Dendritic cell treated with granulocyte-macrophage colony-stimulating factor and Interleukin-4, amounts not matched to agents 40 ng/mL and 50 ng/mL, for 4 days (primary cell): ENCODE measurements at regions of chr2 and their contacts with region 1.

Region 1: GRCh38 chr2:178280244-178280852 is 86.0 kb downstream of the OSBPL6 start:
- H3K4me3 Mint-ChIP-seq: no peak overlapping the region
- H3K27ac Mint-ChIP-seq: no peak overlapping the region
- H3K4me1 Mint-ChIP-seq: peaks cover 24% of the 10 kb centered on the region
- H3K27me3 Mint-ChIP-seq: peaks cover 1% of the 10 kb centered on the region

Region 2: DNA sequence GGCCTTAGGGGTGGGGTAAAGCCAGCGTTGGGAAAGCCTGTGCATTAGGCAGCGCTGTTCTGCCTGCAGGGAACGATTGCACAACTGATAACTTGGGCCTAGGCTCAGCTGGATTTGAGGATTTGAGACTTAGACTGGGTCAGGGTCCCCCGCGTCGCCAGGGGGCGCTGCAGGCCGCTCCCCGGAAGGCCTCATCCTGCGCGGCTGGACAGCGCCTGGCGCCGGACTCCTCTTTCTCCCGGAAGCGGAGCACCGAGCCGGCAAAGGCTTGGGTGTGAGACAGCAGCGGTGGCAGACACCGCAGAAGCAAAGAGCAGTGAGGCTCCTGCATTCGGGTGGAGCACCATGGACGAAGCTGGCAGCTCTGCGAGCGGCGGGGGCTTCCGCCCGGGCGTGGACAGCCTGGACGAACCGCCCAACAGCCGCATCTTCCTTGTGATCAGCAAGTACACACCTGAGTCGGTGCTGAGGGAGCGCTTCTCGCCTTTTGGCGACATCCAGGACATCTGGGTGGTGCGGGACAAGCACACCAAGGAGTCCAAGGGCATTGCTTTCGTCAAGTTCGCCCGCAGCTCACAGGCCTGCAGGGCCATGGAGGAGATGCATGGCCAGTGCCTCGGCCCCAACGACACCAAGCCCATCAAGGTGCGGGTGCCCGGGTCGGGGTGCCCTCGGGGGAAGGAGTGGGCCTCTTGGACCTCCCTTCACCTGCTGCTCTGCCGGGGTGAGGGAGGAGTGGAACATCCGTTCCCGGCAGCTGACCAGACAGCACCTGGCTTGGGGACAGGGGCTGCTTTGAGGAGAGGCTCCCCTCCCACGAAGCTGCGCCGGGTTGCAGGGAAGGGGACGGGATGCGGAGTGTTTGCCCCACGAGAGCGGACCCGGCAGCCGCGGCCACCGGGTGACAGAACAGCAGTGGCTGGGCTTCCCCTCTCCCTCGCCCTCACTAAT is 167.9 kb before region 1 on chr2 and contains the start of gene RBM45:
- intact Hi-C with region 1: loop called (anchors 2 kb)
- H3K4me3 Mint-ChIP-seq: peak within 1 kb of the TSS; percentile 91
- H3K27ac Mint-ChIP-seq: peak within 1 kb of the TSS; percentile 89
- H3K4me1 Mint-ChIP-seq: peaks cover 32% of the 10 kb centered on the region
- H3K27me3 Mint-ChIP-seq: peaks cover 3% of the 10 kb centered on the region

Region 3: DNA sequence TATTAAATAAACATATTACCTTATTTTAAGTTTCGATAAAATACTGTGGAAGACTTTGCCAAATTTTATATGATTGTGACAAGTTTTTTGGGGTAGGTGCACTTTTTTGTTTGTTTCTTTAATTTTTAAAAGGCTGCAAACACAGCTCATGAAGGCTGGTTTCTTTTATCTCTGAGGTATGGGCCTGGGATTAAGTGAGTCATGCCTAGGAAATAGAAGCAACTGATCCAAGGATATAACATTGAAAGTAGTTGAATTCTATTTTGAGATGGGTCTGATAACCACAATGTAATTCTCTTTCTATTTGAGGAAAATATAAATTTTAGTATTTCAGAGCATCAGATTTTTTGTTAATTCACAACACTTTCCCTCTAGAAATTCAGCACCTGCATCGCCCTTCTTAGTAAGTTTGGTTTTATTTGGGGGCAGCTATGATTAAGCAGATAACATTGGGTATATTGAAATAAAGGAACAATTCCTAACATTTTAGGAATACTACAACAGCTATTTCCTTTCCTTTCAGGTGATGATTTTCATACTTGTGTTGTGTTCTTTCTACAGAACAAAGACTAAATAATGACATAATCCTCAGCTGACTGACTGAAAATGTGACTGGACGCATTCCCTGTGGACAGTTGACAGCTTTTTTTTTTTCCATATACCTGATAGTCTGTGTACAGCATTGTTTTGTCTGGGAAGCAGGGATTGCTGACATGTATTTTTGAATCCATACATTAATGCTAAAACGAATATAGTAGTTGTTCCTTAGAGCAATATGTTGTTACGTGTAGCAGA is 151.3 kb before region 1 on chr2:
- intact Hi-C with region 1: loop called (anchors 2 kb)
- H3K4me3 Mint-ChIP-seq: no peak overlapping the region
- H3K27ac Mint-ChIP-seq: no peak overlapping the region
- H3K4me1 Mint-ChIP-seq: no peaks in the 10 kb centered on the region
- H3K27me3 Mint-ChIP-seq: no peaks in the 10 kb centered on the region

Region 4: GRCh38 chr2:178193823-178194599 is 86.3 kb before region 1 on chr2 and contains the start of gene OSBPL6:
- intact Hi-C with region 1: loop called (anchors 5 kb)
- H3K4me3 Mint-ChIP-seq: peak within 1 kb of the TSS; percentile 78
- H3K27ac Mint-ChIP-seq: no peak within 1 kb of the TSS
- H3K4me1 Mint-ChIP-seq: peaks cover 12% of the 10 kb centered on the region
- H3K27me3 Mint-ChIP-seq: peaks cover 66% of the 10 kb centered on the region

Region 5: GRCh38 chr2:178241844-178242551 is 38.4 kb before region 1 on chr2:
- intact Hi-C with region 1: no loop called
- H3K4me3 Mint-ChIP-seq: no peak overlapping the region
- H3K27ac Mint-ChIP-seq: no peak overlapping the region
- H3K4me1 Mint-ChIP-seq: no peaks in the 10 kb centered on the region
- H3K27me3 Mint-ChIP-seq: no peaks in the 10 kb centered on the region